ENCODE measurements at regions of chr17 and their contacts with region 1.

Region 1: GRCh38 chr17:39668199-39668966 is at the start of gene PNMT:
- DNase-seq: peak in 1 of 2 donors; percentile 75
- ATAC-seq: no peak
- H3K4me3 ChIP-seq: peak within 1 kb of the TSS; percentile 52 to 62 (median 59)
- H3K27ac ChIP-seq: peak within 1 kb of the TSS; percentile 96 to 99 (median 98)
- H3K4me1 ChIP-seq: peaks cover 47 to 64% of the 10 kb centered on the region in 2 donors
- H3K27me3 ChIP-seq: no peaks in the 10 kb centered on the region
- CTCF ChIP-seq: peak; percentile 65 to 80 (median 77)
- POLR2A ChIP-seq: peak in 1 of 2 donors; percentile 32
- total RNA-seq, gene PNMT: 2.0 to 11.8 (median 7.1) TPM

Region 2: DNA sequence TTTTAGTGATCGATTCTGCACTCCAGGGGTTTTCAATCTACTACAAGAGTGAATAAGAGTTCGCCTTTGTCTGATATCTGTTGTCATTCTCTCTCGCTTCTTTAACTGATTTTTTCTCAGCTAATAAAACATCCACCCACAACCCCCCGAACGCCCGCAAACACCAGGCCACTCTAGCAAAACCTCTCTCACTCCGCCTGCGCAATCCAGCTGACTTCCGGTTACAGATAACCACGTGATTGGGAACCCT is 468.6 kb before region 1 on chr17:
- in situ Hi-C with region 1: no loop called
- intact Hi-C with region 1: loop called (anchors 10 kb)
- DNase-seq: peak; percentile 92
- ATAC-seq: peak; percentile 69 to 82
- H3K4me3 ChIP-seq: peak overlapping the region; percentile 79 to 94 (median 84)
- H3K27ac ChIP-seq: peak overlapping the region; percentile 87 to 99 (median 94)
- H3K4me1 ChIP-seq: peaks cover 44 to 45% of the 10 kb centered on the region in 2 donors
- H3K27me3 ChIP-seq: no peaks in the 10 kb centered on the region
- CTCF ChIP-seq: no peak
- POLR2A ChIP-seq: peak in 1 of 2 donors; percentile 82

Region 3: DNA sequence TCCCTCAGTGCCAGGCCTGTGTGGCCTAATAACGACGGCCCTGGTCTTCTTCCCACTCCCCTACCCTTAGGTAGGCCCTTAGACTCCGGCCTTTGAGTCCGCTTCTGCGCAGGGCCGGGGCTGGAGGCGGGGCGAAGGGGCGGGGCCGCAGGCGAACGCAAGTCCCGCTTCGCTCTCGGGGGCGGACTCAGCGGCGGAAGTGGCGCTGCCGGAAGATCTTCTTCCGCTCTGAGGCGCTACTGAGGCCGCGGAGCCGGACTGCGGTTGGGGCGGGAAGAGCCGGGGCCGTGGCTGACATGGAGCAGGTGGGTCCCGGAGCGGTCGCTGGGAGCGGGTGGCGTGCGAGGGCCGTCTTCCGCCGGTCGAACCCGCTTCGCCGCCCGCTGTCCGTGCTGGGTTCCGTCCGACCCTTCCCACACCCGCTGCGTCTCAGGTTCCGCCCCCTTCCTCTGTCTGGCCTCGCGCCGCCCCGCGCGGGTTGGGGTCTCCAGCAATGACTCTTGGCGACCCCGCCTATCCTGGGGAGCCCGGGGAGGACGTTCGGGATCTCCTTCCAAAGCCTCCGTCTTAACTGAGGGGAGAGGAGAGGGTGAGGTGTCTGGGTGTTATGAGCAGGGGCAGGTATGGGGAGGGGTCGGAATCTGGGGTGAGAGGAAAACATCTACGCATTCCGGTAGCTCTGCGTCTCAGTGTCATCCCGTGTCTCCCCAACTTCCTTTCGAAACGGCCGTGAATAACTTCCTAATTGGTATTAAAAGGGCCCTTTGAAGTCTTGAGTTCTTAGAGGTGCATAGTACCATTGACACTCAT is 31.3 kb before region 1 on chr17 and contains the start of gene STARD3:
- in situ Hi-C with region 1: no loop called
- intact Hi-C with region 1: loop called (anchors 2 kb)
- DNase-seq: peak; percentile 84 to 89
- ATAC-seq: peak; percentile 92 to 93
- H3K4me3 ChIP-seq: peak within 1 kb of the TSS; percentile 76 to 97 (median 92)
- H3K27ac ChIP-seq: peak within 1 kb of the TSS; percentile 93 to 99 (median 94)
- H3K4me1 ChIP-seq: peaks cover 41 to 48% of the 10 kb centered on the region in 2 donors
- H3K27me3 ChIP-seq: no peaks in the 10 kb centered on the region
- CTCF ChIP-seq: peak in 3 of 5 experiments; percentile 16 to 44 (median 26)
- POLR2A ChIP-seq: peak; percentile 46 to 56
- total RNA-seq, gene STARD3: 31.0 to 41.7 (median 41.0) TPM